GM12878 (cell line): ENCODE measurements at regions of chr15 and their contacts with region 1.

Region 1: GRCh38 chr15:54582863-54583643 is 604.8 kb downstream of the UNC13C start:
- DNase-seq: peak; percentile 74
- ATAC-seq: peak; percentile 74; the same call in 2 of the 3 replicates
- H3K4me3 ChIP-seq: no peak overlapping the region
- H3K27ac ChIP-seq: no peak overlapping the region; the same call in 1 of the 2 replicates
- H3K4me1 ChIP-seq: 0 out of 2 replicates have a peak, but pooled peaks cover 3% of the 10 kb centered on the region
- H3K27me3 ChIP-seq: no peaks in the 10 kb centered on the region
- CTCF ChIP-seq: no peak
- EP300 ChIP-seq: peak; percentile 78 to 94
- POLR2A ChIP-seq: no peak
- RAD21 ChIP-seq: no peak

Region 2: DNA sequence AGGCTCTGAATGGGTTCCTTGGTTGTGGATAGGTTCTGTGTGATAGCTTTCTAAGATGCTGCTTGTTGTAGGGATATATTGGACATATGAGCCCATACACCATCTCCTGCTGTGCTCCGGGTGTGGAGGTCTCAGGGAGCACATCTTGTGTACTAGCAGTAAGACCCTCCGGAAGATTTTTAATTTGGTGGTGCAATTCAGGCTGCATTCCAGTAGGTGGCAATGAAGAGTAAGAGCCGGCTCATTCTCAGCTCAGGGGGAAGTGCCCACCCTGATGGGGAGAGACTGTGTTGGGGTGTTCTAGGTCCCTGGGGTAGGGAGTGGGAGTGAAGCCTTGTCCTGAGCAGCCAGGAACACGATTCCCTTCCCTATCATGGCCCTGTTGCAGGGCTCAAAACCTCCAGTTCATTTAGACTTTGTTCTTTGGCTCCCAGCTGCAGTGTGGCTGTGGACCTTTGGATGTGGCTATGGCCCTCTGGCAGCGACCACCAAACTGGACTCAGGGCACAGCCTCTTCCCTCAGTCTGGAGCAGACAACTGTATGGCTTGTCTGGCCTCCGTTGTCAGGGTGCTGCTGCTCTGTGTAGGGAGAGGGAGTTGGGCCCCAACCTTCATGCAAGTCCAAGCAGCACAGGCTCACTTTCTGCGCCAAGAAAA is 500.1 kb before region 1 on chr15:
- CTCF ChIA-PET with region 1: interaction called, 8 read pairs
- POLR2A ChIA-PET with region 1: no interaction called
- RAD21 ChIA-PET with region 1: interaction called, 24 read pairs
- SMC1A ChIA-PET with region 1: interaction called, 4 read pairs
- in situ Hi-C with region 1: no loop called
- intact Hi-C with region 1: loop called (anchors 10 kb)
- DNase-seq: no peak
- ATAC-seq: peak; percentile 68
- H3K4me3 ChIP-seq: no peak overlapping the region
- H3K27ac ChIP-seq: no peak overlapping the region
- H3K4me1 ChIP-seq: no peaks in the 10 kb centered on the region
- H3K27me3 ChIP-seq: no peaks in the 10 kb centered on the region
- CTCF ChIP-seq: peak; percentile 56 to 80 (median 61)
- EP300 ChIP-seq: no peak
- POLR2A ChIP-seq: no peak
- RAD21 ChIP-seq: peak; percentile 72

Region 3: DNA sequence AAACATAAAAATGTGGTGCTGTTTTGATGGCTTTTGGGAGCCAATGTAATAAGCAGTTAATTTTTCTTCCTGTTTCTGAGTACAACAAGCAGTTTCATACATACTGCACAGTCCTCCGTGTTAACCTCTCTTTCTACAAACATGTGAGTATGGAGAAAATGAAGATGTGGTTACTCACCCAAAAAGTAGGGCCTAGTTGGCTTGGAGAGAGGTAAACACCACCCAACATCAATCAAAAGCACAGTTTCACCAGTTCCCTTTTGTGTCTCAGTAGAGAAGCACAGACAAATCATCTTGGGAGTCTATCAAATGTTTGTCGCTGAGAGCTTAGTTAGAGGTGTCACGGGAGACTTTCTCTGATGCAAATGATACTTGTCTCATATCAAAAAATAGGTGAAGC is 284.7 kb before region 1 on chr15:
- CTCF ChIA-PET with region 1: no interaction called
- POLR2A ChIA-PET with region 1: interaction called, 10 read pairs
- RAD21 ChIA-PET with region 1: interaction called, 7 read pairs
- SMC1A ChIA-PET with region 1: interaction called, 8 read pairs
- in situ Hi-C with region 1: no loop called
- intact Hi-C with region 1: no loop called
- DNase-seq: peak; percentile 32
- ATAC-seq: peak; percentile 94
- H3K4me3 ChIP-seq: no peak overlapping the region
- H3K27ac ChIP-seq: no peak overlapping the region
- H3K4me1 ChIP-seq: no peaks in the 10 kb centered on the region
- H3K27me3 ChIP-seq: no peaks in the 10 kb centered on the region
- CTCF ChIP-seq: no peak
- EP300 ChIP-seq: peak; percentile 80 to 88
- POLR2A ChIP-seq: no peak
- RAD21 ChIP-seq: no peak

Region 4: GRCh38 chr15:54502416-54503075 is 80.5 kb before region 1 on chr15:
- CTCF ChIA-PET with region 1: no interaction called
- POLR2A ChIA-PET with region 1: interaction called, 10 read pairs
- RAD21 ChIA-PET with region 1: interaction called, 30 read pairs
- SMC1A ChIA-PET with region 1: interaction called, 11 read pairs
- in situ Hi-C with region 1: no loop called
- intact Hi-C with region 1: no loop called
- DNase-seq: no peak
- ATAC-seq: peak; percentile 44
- H3K4me3 ChIP-seq: no peak overlapping the region
- H3K27ac ChIP-seq: no peak overlapping the region
- H3K4me1 ChIP-seq: no peaks in the 10 kb centered on the region
- H3K27me3 ChIP-seq: no peaks in the 10 kb centered on the region
- CTCF ChIP-seq: no peak
- EP300 ChIP-seq: no peak
- POLR2A ChIP-seq: no peak
- RAD21 ChIP-seq: no peak

Region 5: DNA sequence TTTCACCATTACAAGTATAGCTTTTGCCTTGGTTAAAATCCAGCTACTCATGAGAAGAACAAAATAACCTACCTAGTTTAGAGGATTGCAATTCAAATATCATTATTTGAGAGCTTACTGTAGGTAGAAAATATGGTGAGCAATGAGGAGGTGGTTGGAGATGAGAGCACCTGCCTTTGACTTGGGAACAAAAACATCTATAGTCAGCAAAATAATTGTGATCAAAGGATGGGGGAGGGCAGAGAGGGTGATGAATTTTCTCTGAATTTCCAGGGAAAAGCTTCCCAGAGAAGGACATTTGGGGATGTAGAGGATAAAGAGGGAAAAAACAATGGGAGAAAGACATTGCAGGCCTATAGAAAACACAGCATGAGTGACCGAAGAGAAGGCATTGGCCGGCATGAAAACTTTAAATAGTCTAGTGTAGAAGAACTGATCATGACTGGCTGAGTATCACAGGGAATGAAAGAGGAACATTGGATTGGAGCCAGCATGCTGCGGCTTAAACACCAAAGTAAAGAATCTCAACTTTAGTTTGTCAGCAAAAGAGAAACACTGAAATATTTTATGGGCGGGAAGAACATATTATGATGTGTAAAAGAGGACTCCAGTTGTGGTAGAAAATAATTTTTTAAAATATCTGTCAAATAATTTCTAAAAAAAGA is 23.5 kb before region 1 on chr15:
- CTCF ChIA-PET with region 1: interaction called, 6 read pairs
- POLR2A ChIA-PET with region 1: interaction called, 6 read pairs
- RAD21 ChIA-PET with region 1: interaction called, 10 read pairs
- SMC1A ChIA-PET with region 1: interaction called, 8 read pairs
- in situ Hi-C with region 1: no loop called
- intact Hi-C with region 1: no loop called
- DNase-seq: no peak
- ATAC-seq: peak; percentile 41
- H3K4me3 ChIP-seq: no peak overlapping the region
- H3K27ac ChIP-seq: no peak overlapping the region
- H3K4me1 ChIP-seq: no peaks in the 10 kb centered on the region
- H3K27me3 ChIP-seq: no peaks in the 10 kb centered on the region
- CTCF ChIP-seq: no peak
- EP300 ChIP-seq: no peak
- POLR2A ChIP-seq: no peak
- RAD21 ChIP-seq: no peak

Region 6: GRCh38 chr15:54605043-54605442 is 22.0 kb after region 1 on chr15:
- CTCF ChIA-PET with region 1: interaction called, 3 read pairs
- POLR2A ChIA-PET with region 1: interaction called, 4 read pairs
- RAD21 ChIA-PET with region 1: interaction called, 10 read pairs
- SMC1A ChIA-PET with region 1: interaction called, 23 read pairs
- in situ Hi-C with region 1: no loop called
- intact Hi-C with region 1: no loop called
- DNase-seq: no peak
- ATAC-seq: no peak; the same call in 2 of the 3 replicates
- H3K4me3 ChIP-seq: no peak overlapping the region
- H3K27ac ChIP-seq: no peak overlapping the region
- H3K4me1 ChIP-seq: no peaks in the 10 kb centered on the region
- H3K27me3 ChIP-seq: no peaks in the 10 kb centered on the region
- CTCF ChIP-seq: no peak
- EP300 ChIP-seq: no peak
- POLR2A ChIP-seq: no peak
- RAD21 ChIP-seq: no peak

Region 7: GRCh38 chr15:54820811-54821210 is 237.8 kb after region 1 on chr15:
- CTCF ChIA-PET with region 1: no interaction called
- POLR2A ChIA-PET with region 1: no interaction called
- RAD21 ChIA-PET with region 1: no interaction called
- SMC1A ChIA-PET with region 1: no interaction called
- in situ Hi-C with region 1: no loop called
- intact Hi-C with region 1: no loop called
- DNase-seq: no peak
- ATAC-seq: no peak
- H3K4me3 ChIP-seq: no peak overlapping the region
- H3K27ac ChIP-seq: no peak overlapping the region
- H3K4me1 ChIP-seq: no peaks in the 10 kb centered on the region
- H3K27me3 ChIP-seq: no peaks in the 10 kb centered on the region
- CTCF ChIP-seq: no peak
- EP300 ChIP-seq: no peak
- POLR2A ChIP-seq: no peak
- RAD21 ChIP-seq: no peak

Region 8: DNA sequence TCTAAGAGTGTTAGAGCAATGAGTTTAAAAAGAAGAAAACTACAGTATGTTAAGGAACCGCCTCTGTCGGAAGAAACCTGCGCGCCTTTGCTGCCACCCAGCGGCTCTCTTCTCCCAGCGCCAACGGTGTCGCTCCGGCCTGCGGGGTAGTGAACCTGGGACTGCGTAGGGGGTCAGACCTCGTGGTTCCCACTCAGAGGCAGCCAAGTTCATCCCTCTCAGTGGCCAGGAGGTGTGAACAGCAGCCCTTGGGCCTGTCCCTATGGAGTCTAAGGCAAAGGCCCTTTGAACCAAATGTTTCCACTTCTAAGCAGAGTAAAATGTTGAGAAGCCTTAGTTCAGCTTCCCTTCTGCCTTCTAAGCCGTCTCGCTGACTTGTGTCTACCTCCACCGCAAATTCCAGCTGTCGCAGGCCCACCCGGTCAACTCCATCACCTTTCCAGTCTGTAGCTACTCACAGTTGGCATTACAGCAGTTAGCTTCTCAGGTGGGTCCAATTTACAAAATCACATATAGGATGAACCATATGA is 707.5 kb after region 1 on chr15:
- CTCF ChIA-PET with region 1: no interaction called
- POLR2A ChIA-PET with region 1: no interaction called
- RAD21 ChIA-PET with region 1: no interaction called
- SMC1A ChIA-PET with region 1: no interaction called
- in situ Hi-C with region 1: no loop called
- intact Hi-C with region 1: loop called (anchors 10 kb)
- DNase-seq: no peak
- ATAC-seq: peak; percentile 83
- H3K4me3 ChIP-seq: peak overlapping the region; percentile 89; the same call in 1 of the 2 replicates
- H3K27ac ChIP-seq: no peak overlapping the region; the same call in 1 of the 2 replicates
- H3K4me1 ChIP-seq: no peaks in the 10 kb centered on the region; the same call in 1 of the 2 replicates
- H3K27me3 ChIP-seq: no peaks in the 10 kb centered on the region
- CTCF ChIP-seq: peak; percentile 90 to 97 (median 92)
- EP300 ChIP-seq: no peak; a peak in 1 of 4 replicates
- POLR2A ChIP-seq: no peak
- RAD21 ChIP-seq: peak; percentile 96